Naive thymus-derived CD4-positive, alpha-beta T cell (primary cell): ENCODE measurements at regions of chr19 and their contacts with region 1.

Region 1: GRCh38 chr19:2151339-2152229 is at the start of gene AP3D1:
- DNase-seq: peak; percentile 98 to 100 (median 100)
- ATAC-seq: peak; percentile 95
- H3K4me3 ChIP-seq: peak within 1 kb of the TSS; percentile 76
- H3K4me3 Mint-ChIP-seq: peak within 1 kb of the TSS; percentile 76 to 93 (median 84)
- H3K27ac ChIP-seq: peak within 1 kb of the TSS; percentile 95
- H3K27ac Mint-ChIP-seq: peak within 1 kb of the TSS; percentile 74 to 95 (median 89)
- H3K4me1 ChIP-seq: peaks cover 19 to 29% of the 10 kb centered on the region in 2 donors
- H3K4me1 Mint-ChIP-seq: peaks cover 16 to 48% (median 41%) of the 10 kb centered on the region in 7 donors
- H3K27me3 ChIP-seq: no peaks in the 10 kb centered on the region
- H3K27me3 Mint-ChIP-seq: peaks cover 0 to 2% (median 0%) of the 10 kb centered on the region in 5 donors
- total RNA-seq, gene AP3D1: 63.7 to 106 (median 80.3) TPM

Region 2: DNA sequence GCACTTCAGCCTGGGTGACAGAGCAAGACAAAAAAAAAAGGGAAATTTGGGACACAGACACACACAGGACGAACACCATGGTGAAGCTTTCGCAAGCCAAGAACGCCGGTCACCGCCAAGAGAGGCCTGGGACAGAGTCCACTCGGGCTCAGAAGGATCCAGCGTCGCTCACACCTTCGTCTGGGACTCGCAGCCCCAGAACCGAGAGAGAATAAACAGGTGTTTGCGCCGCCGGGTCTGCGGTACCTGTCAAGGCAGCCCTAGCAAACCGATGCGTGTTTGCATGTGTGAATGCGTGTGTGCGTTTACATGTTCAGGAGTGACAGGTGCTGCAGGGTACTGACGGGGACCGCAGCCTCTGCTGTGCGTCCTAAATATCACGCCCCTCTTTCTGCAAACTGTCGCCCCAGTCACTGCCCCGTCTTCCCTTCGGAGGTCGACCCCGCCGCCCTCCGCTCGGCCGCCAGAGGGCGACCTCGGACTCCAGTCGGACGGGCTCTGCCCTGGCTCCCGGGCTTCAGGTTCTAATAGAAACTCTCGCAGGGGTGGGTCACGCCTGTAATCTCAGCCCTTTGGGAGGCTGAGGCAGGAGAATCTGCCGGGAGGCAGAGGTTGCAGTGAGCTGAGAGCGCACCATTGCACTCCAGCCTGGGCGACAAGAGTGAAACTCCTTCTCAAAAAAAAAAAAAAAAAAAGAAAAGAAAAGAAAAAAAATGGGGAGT is 222.4 kb before region 1 on chr19:
- CTCF ChIA-PET with region 1: no interaction called
- POLR2A ChIA-PET with region 1: no interaction called
- intact Hi-C with region 1: no loop called
- DNase-seq: peak; percentile 65 to 86 (median 76)
- ATAC-seq: peak; percentile 93
- H3K4me3 ChIP-seq: peak overlapping the region; percentile 36
- H3K4me3 Mint-ChIP-seq: peak overlapping the region; percentile 71 to 85 (median 80)
- H3K27ac ChIP-seq: peak overlapping the region; percentile 45
- H3K27ac Mint-ChIP-seq: peak overlapping the region in 7 of 9 donors; percentile 23 to 80 (median 32)
- H3K4me1 ChIP-seq: peaks cover 8 to 9% of the 10 kb centered on the region in 2 donors
- H3K4me1 Mint-ChIP-seq: peaks cover 6 to 27% (median 22%) of the 10 kb centered on the region in 7 donors
- H3K27me3 ChIP-seq: no peaks in the 10 kb centered on the region
- H3K27me3 Mint-ChIP-seq: no peaks in the 10 kb centered on the region

Region 3: DNA sequence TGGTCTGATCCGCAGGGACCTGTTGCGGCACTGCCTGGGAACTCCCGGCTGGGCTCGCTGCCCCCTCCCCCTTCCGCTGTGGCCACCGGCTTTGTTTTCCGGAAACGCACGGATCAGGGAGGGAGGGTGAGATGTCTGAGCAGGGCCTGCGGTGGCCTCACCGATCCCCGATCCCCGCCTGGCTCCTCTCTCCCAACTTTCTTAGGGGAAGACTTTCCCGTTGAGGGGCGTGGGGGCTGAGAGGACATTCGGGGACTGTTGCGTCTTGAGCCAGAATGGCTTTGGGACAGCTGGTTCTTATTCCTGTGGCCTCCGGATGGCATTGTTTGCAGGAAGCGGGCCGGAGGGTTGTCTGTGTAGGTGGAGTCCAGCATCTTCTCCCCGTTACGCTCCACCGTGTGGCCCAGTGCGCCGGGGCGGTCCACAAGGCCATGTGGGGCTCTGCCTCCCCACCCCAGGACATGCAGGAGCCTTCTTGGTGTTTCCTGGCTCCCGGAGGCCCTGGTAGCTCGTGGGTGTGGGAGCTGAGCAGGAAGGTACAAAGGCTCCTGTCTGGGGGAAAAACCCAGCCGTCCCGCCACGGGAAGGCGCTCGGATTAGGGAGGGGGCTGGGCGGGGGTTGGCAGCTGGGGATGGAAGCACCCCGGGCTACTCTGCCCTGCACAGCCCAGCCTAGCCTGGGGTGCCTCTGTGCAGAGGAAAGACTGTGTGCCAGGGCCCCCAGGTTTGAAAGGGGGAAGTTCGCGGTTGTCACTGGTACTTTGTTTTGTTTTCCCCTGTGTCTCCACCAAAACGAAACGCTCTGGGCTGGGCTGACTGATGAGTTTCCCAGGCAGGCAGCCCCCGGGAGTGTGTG is 209.3 kb before region 1 on chr19:
- CTCF ChIA-PET with region 1: no interaction called
- POLR2A ChIA-PET with region 1: no interaction called
- intact Hi-C with region 1: loop called in 1 of 2 experiments (anchors 2 kb)
- DNase-seq: peak; percentile 58 to 84 (median 78)
- ATAC-seq: peak; percentile 51
- H3K4me3 ChIP-seq: peak overlapping the region; percentile 94
- H3K4me3 Mint-ChIP-seq: peak overlapping the region; percentile 91 to 100 (median 96)
- H3K27ac ChIP-seq: peak overlapping the region; percentile 98
- H3K27ac Mint-ChIP-seq: peak overlapping the region; percentile 90 to 99 (median 97)
- H3K4me1 ChIP-seq: peaks cover 21 to 30% of the 10 kb centered on the region in 2 donors
- H3K4me1 Mint-ChIP-seq: peaks cover 22 to 44% (median 30%) of the 10 kb centered on the region in 7 donors
- H3K27me3 ChIP-seq: no peaks in the 10 kb centered on the region
- H3K27me3 Mint-ChIP-seq: peaks cover 0 to 2% (median 0%) of the 10 kb centered on the region in 5 donors

Region 4: DNA sequence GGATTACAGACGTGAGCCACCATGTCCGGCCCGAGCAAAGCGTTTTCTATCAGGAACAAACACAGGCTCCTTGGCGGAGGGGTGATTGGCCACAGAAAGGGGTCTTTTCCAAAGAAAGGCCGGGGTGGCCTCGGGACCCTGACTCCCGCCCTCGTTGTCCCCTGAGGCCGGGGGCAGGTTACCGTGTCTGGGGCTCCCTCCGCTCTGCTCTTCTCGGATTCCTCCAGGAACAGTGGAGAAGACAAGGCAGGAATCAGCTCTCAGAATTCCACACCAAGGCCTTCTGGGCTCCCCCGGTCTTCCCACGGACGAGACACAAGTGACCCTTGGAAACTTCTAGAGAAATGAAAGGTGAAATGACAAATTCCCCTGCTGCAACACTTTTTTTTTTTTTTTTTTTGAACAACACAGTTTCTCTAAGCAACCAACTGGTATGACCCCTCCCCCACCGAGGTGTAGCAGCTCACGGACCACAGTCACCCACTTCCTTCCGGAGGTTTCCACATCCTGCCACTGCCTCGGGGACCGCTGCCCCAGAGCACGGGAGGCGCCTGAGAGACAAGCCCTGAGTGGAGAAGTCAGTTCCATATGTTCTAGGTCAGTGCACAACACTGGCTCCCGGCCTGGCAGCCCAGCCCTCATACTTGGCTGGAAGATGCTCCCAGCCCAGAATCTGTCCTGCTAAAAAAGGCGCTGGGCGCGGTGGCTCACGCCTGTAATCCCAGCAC is 66.4 kb before region 1 on chr19:
- CTCF ChIA-PET with region 1: interaction called, 6 read pairs
- POLR2A ChIA-PET with region 1: interaction called, 5 read pairs
- intact Hi-C with region 1: loop called (anchors 1 to 2 kb)
- DNase-seq: peak; percentile 68 to 97 (median 95)
- ATAC-seq: peak; percentile 86
- H3K4me3 ChIP-seq: peak overlapping the region; percentile 98
- H3K4me3 Mint-ChIP-seq: peak overlapping the region; percentile 87 to 99 (median 95)
- H3K27ac ChIP-seq: peak overlapping the region; percentile 99
- H3K27ac Mint-ChIP-seq: peak overlapping the region; percentile 92 to 99 (median 96)
- H3K4me1 ChIP-seq: peaks cover 65 to 72% of the 10 kb centered on the region in 2 donors
- H3K4me1 Mint-ChIP-seq: peaks cover 48 to 76% (median 68%) of the 10 kb centered on the region in 7 donors
- H3K27me3 ChIP-seq: no peaks in the 10 kb centered on the region
- H3K27me3 Mint-ChIP-seq: peaks cover 0 to 2% (median 0%) of the 10 kb centered on the region in 5 donors

Region 5: GRCh38 chr19:2269244-2269947 is 117.8 kb after region 1 on chr19:
- CTCF ChIA-PET with region 1: interaction called, 6 read pairs
- POLR2A ChIA-PET with region 1: no interaction called
- intact Hi-C with region 1: loop called in 1 of 2 experiments (anchors 1 kb)
- DNase-seq: peak; percentile 98 to 100 (median 99)
- ATAC-seq: peak; percentile 90
- H3K4me3 ChIP-seq: peak overlapping the region; percentile 96
- H3K4me3 Mint-ChIP-seq: peak overlapping the region; percentile 86 to 96 (median 90)
- H3K27ac ChIP-seq: peak overlapping the region; percentile 87
- H3K27ac Mint-ChIP-seq: peak overlapping the region; percentile 72 to 94 (median 89)
- H3K4me1 ChIP-seq: peaks cover 32 to 34% of the 10 kb centered on the region in 2 donors
- H3K4me1 Mint-ChIP-seq: peaks cover 28 to 52% (median 35%) of the 10 kb centered on the region in 7 donors
- H3K27me3 ChIP-seq: no peaks in the 10 kb centered on the region
- H3K27me3 Mint-ChIP-seq: no peaks in the 10 kb centered on the region

Region 6: GRCh38 chr19:2427429-2428320 is 276.1 kb after region 1 on chr19 and contains the start of gene TIMM13:
- CTCF ChIA-PET with region 1: no interaction called
- POLR2A ChIA-PET with region 1: no interaction called
- intact Hi-C with region 1: loop called (anchors 1 kb)
- DNase-seq: peak; percentile 96 to 99 (median 98)
- ATAC-seq: peak; percentile 96
- H3K4me3 ChIP-seq: peak within 1 kb of the TSS; percentile 97
- H3K4me3 Mint-ChIP-seq: peak within 1 kb of the TSS; percentile 89 to 98 (median 95)
- H3K27ac ChIP-seq: peak within 1 kb of the TSS; percentile 91
- H3K27ac Mint-ChIP-seq: peak within 1 kb of the TSS; percentile 93 to 99 (median 97)
- H3K4me1 ChIP-seq: peaks cover 11 to 16% of the 10 kb centered on the region in 2 donors
- H3K4me1 Mint-ChIP-seq: peaks cover 0 to 16% (median 14%) of the 10 kb centered on the region in 7 donors
- H3K27me3 ChIP-seq: no peaks in the 10 kb centered on the region
- H3K27me3 Mint-ChIP-seq: peaks cover 0 to 2% (median 0%) of the 10 kb centered on the region in 5 donors
- total RNA-seq, gene TIMM13: 31.3 to 70.8 (median 35.4) TPM